ENCODE measurements at regions of chr4 and their contacts with region 1.

Region 1: GRCh38 chr4:83582289-83582769 is 46.4 kb downstream of the GPAT3 start:
- DNase-seq: peak in 1 of 2 experiments; percentile 12
- H3K4me3 ChIP-seq: no peak overlapping the region
- H3K4me3 Mint-ChIP-seq: no peak overlapping the region
- H3K27ac Mint-ChIP-seq: no peak overlapping the region
- H3K4me1 ChIP-seq: no peaks in the 10 kb centered on the region
- H3K4me1 Mint-ChIP-seq: peaks cover 7% of the 10 kb centered on the region
- H3K27me3 ChIP-seq: no peaks in the 10 kb centered on the region
- H3K27me3 Mint-ChIP-seq: no peaks in the 10 kb centered on the region
- CTCF ChIP-seq: peak in 1 of 2 experiments; percentile 36

Region 2: GRCh38 chr4:83490876-83491450 is 91.4 kb before region 1 on chr4:
- CTCF ChIA-PET with region 1: no interaction called
- POLR2A ChIA-PET with region 1: no interaction called
- intact Hi-C with region 1: loop called (anchors 1 kb)
- DNase-seq: peak in 1 of 2 experiments; percentile 20
- H3K4me3 ChIP-seq: no peak overlapping the region
- H3K4me3 Mint-ChIP-seq: no peak overlapping the region
- H3K27ac Mint-ChIP-seq: no peak overlapping the region
- H3K4me1 ChIP-seq: peaks cover 18% of the 10 kb centered on the region
- H3K4me1 Mint-ChIP-seq: peaks cover 10% of the 10 kb centered on the region
- H3K27me3 ChIP-seq: no peaks in the 10 kb centered on the region
- H3K27me3 Mint-ChIP-seq: no peaks in the 10 kb centered on the region
- CTCF ChIP-seq: peak; percentile 73 to 78

Measured in Caco-2 (cell line).